Stomach (tissue), 19 donors: ENCODE measurements at regions of chr7 and their contacts with region 1.

Region 1: GRCh38 chr7:150451097-150451793 is 815 bp downstream of the GIMAP8 start:
- DNase-seq: peak in 1 of 2 donors; percentile 64
- H3K4me3 ChIP-seq: peak overlapping the region; percentile 36 to 50 (median 47)
- H3K27ac ChIP-seq: peak overlapping the region; percentile 37 to 86 (median 76)
- H3K4me1 ChIP-seq: peaks cover 0 to 22% (median 11%) of the 10 kb centered on the region in 4 donors
- H3K27me3 ChIP-seq: peaks cover 0 to 18% (median 6%) of the 10 kb centered on the region in 3 donors
- CTCF ChIP-seq: no peak
- EP300 ChIP-seq: no peak
- POLR2A ChIP-seq: no peak

Region 2: GRCh38 chr7:150753826-150754603 is 302.8 kb after region 1 on chr7:
- intact Hi-C with region 1: loop called (anchors 10 kb)
- DNase-seq: peak in 1 of 2 donors; percentile 40
- H3K4me3 ChIP-seq: no peak overlapping the region
- H3K27ac ChIP-seq: peak overlapping the region in 1 of 5 donors; percentile 18
- H3K4me1 ChIP-seq: peaks cover 0 to 22% (median 0%) of the 10 kb centered on the region in 4 donors
- H3K27me3 ChIP-seq: no peaks in the 10 kb centered on the region
- CTCF ChIP-seq: no peak
- EP300 ChIP-seq: no peak
- POLR2A ChIP-seq: no peak